ENCODE measurements at regions of chr10 and their contacts with region 1.

Region 1: DNA sequence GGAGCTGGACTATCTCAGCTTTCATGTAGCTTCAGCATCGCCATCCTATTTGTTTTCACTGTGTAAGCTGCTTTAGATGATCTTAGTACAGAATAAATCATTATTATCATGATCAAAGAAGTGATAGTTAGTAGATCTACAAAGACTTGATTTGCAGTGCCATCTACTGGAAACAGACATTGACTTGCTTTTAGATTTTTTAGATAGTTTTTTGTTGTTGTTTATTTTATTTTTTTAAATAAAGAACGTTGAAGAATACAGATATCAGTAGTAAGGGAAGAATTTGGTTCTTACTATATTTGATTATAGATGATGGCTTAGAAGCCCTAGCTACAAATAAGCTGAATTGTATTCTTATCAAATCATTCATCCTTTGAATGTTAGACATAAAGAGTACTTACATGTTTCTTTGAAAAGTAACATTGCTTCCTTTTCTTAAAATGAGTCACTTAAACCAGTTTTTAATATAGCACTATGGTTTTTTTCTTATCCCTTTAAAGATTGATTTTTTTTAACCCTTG is 6.3 kb upstream of the SFMBT2 start:
- DNase-seq: no peak
- H3K4me3 ChIP-seq: no peak overlapping the region
- H3K27me3 ChIP-seq: peaks cover 10% of the 10 kb centered on the region
- CTCF ChIP-seq: peak; percentile 35; the same call in 1 of the 2 replicates

Region 2: GRCh38 chr10:6667679-6668270 is 749.4 kb before region 1 on chr10:
- CTCF ChIA-PET with region 1: interaction called, 24 read pairs
- POLR2A ChIA-PET with region 1: no interaction called
- DNase-seq: no peak
- H3K4me3 ChIP-seq: no peak overlapping the region
- H3K27me3 ChIP-seq: no peaks in the 10 kb centered on the region
- CTCF ChIP-seq: peak; percentile 67

Region 3: GRCh38 chr10:7260412-7260900 is 156.7 kb before region 1 on chr10:
- CTCF ChIA-PET with region 1: no interaction called
- POLR2A ChIA-PET with region 1: no interaction called
- DNase-seq: peak; percentile 32
- H3K4me3 ChIP-seq: no peak overlapping the region
- H3K27me3 ChIP-seq: no peaks in the 10 kb centered on the region
- CTCF ChIP-seq: peak; percentile 52

Region 4: DNA sequence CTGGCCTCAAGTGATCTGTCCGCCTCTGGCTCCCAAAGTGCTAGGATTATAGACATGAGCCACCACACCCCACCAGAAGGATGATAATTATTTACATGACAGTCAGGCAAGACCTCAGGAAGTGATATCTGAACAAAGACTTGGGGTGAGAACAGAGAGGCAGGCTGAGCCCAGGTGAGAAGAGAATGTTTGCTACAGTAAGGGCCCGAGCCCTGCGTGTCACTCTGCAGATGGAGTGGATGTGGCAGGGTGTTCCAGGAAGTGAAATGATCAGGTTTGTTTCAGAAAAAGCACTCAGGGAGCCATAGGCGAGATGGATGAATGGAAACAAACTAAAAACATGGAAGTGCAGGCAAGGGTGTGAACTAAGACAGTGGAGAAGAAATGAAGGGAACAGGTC is 28.6 kb before region 1 on chr10:
- CTCF ChIA-PET with region 1: no interaction called
- POLR2A ChIA-PET with region 1: no interaction called
- DNase-seq: no peak
- H3K4me3 ChIP-seq: no peak overlapping the region
- H3K27me3 ChIP-seq: no peaks in the 10 kb centered on the region
- CTCF ChIP-seq: no peak

Region 5: GRCh38 chr10:7818295-7819122 is 401.3 kb after region 1 on chr10 and contains the start of gene TAF3:
- CTCF ChIA-PET with region 1: no interaction called
- POLR2A ChIA-PET with region 1: no interaction called
- DNase-seq: no peak
- H3K4me3 ChIP-seq: peak within 1 kb of the TSS; percentile 98
- H3K27me3 ChIP-seq: no peaks in the 10 kb centered on the region
- CTCF ChIP-seq: no peak
- polyA plus RNA-seq, gene TAF3: 1.7 and 1.8 TPM in 2 replicates